HEK293T (cell line): ENCODE measurements at regions of chr6 and their contacts with region 1.

Region 1: DNA sequence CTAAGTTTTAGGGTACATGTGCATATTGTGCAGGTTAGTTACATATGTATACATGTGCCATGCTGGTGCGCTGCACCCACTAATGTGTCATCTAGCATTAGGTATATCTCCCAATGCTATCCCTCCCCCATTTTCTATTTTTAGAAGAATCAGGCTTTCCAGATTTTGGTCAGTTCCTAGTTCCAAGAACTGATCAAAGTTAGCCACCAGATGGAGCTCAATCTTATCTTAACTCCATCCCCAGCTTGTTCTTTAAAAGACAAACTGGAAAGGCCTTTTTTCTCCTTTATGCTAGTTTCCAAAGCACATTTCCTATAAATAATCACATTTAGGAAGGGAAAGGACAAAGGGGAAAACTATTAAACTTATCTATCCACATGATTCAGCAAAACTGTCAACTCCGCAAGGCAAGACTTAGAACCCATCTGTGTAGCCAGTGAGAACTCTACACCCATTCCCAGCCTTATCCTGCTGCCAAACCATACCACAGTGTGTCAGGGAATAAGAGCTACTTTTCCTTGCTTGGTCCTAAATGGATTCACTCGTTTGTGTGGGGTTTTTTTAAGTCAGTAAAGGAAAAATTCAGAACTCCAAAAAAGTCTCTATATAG is 22.8 kb upstream of the KHDC1 start:
- DNase-seq: peak; percentile 44

Region 2: GRCh38 chr6:73329201-73329600 is 43.4 kb after region 1 on chr6:
- CTCF ChIA-PET with region 1: interaction called, 10 read pairs
- POLR2A ChIA-PET with region 1: no interaction called
- DNase-seq: no peak

Region 3: DNA sequence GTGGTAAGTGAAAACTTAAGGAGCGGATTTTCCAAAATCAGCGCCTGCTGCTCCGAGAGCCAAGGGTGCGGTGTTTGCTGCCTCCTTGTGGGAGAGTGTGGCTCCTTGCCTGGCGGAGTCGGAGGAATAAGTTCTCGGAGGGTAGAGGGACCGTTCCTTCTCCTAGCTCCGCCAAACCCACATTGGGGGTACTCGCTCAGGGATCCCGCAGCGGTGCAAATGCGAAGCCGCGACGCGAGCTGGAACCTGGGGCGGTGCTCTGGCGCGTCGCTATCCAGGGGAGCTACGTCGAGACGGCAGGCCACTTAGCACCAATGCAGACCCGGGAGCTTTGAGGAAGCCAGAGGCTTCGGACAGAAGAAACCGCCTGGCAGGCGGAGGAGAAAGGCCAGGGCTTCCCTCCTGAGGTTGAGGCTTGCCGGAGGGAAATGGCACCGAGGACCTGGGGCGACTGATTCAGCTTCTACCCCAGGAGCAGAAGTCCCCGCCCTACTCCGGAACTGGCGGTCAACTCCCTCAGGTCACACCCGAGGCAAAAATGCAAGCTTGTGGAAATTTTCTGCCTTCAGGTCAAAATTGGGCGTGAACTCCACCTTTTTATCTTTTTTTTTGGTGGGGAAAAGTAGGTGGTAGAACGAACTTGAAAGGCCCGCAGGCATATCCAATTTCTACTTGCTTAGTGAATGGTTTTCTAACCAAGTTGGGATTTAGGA is 103.2 kb after region 1 on chr6:
- CTCF ChIA-PET with region 1: interaction called, 11 read pairs
- POLR2A ChIA-PET with region 1: no interaction called
- DNase-seq: peak; percentile 76

Region 4: DNA sequence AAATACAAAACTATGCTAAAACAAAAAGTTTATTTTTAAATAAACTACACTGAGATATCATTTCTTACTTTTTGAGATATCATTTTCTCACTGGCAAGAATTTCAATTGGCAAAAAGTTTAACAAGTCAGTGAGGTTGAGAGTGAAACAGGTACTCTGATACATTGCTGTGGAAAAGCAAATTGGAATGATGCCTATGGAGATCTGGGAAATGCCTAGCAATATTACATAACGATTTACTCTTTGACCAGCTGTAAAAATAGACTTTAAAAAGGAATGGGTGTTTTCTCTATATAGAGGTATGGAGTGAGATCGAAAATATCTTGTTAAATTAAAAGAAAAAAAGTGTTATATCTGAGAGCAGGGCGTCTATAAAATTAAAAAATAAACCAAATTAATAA is 149.5 kb after region 1 on chr6:
- CTCF ChIA-PET with region 1: no interaction called
- POLR2A ChIA-PET with region 1: no interaction called
- DNase-seq: no peak